HepG2 (cell line): ENCODE measurements at regions of chr3 and their contacts with region 1.

Region 1: GRCh38 chr3:24773798-24774197 is 279.1 kb upstream of the THRB start:
- DNase-seq: peak; percentile 49
- ATAC-seq: peak; percentile 95
- H3K4me3 ChIP-seq: no peak overlapping the region
- H3K27ac ChIP-seq: no peak overlapping the region
- H3K4me1 ChIP-seq: no peaks in the 10 kb centered on the region
- H3K27me3 ChIP-seq: no peaks in the 10 kb centered on the region
- CTCF ChIP-seq: peak; percentile 79
- EP300 ChIP-seq: no peak
- POLR2A ChIP-seq: no peak
- RAD21 ChIP-seq: no peak

Region 2: GRCh38 chr3:24508423-24508839 is 265.4 kb before region 1 on chr3:
- CTCF ChIA-PET with region 1: no interaction called
- POLR2A ChIA-PET with region 1: no interaction called
- in situ Hi-C with region 1: no loop called
- intact Hi-C with region 1: no loop called
- DNase-seq: no peak
- ATAC-seq: no peak
- H3K4me3 ChIP-seq: no peak overlapping the region
- H3K27ac ChIP-seq: no peak overlapping the region
- H3K4me1 ChIP-seq: no peaks in the 10 kb centered on the region
- H3K27me3 ChIP-seq: no peaks in the 10 kb centered on the region
- CTCF ChIP-seq: no peak
- EP300 ChIP-seq: no peak
- POLR2A ChIP-seq: no peak
- RAD21 ChIP-seq: no peak

Region 3: GRCh38 chr3:24886501-24886900 is 112.7 kb after region 1 on chr3:
- CTCF ChIA-PET with region 1: no interaction called
- POLR2A ChIA-PET with region 1: no interaction called
- in situ Hi-C with region 1: no loop called
- intact Hi-C with region 1: no loop called
- DNase-seq: no peak
- ATAC-seq: no peak
- H3K4me3 ChIP-seq: no peak overlapping the region
- H3K27ac ChIP-seq: no peak overlapping the region
- H3K4me1 ChIP-seq: no peaks in the 10 kb centered on the region
- H3K27me3 ChIP-seq: no peaks in the 10 kb centered on the region; a peak in 1 of 5 replicates
- CTCF ChIP-seq: no peak
- EP300 ChIP-seq: no peak
- POLR2A ChIP-seq: no peak
- RAD21 ChIP-seq: no peak

Region 4: GRCh38 chr3:25033407-25034029 is 259.7 kb after region 1 on chr3:
- CTCF ChIA-PET with region 1: interaction called, 5 read pairs
- POLR2A ChIA-PET with region 1: no interaction called
- in situ Hi-C with region 1: no loop called
- intact Hi-C with region 1: loop called (anchors 1 kb)
- DNase-seq: peak; percentile 45
- ATAC-seq: peak; percentile 88
- H3K4me3 ChIP-seq: no peak overlapping the region
- H3K27ac ChIP-seq: no peak overlapping the region
- H3K4me1 ChIP-seq: no peaks in the 10 kb centered on the region
- H3K27me3 ChIP-seq: no peaks in the 10 kb centered on the region
- CTCF ChIP-seq: peak; percentile 74
- EP300 ChIP-seq: no peak
- POLR2A ChIP-seq: no peak
- RAD21 ChIP-seq: no peak